GM12878 (cell line): ENCODE measurements at regions of chr7 and their contacts with region 1.

Region 1: DNA sequence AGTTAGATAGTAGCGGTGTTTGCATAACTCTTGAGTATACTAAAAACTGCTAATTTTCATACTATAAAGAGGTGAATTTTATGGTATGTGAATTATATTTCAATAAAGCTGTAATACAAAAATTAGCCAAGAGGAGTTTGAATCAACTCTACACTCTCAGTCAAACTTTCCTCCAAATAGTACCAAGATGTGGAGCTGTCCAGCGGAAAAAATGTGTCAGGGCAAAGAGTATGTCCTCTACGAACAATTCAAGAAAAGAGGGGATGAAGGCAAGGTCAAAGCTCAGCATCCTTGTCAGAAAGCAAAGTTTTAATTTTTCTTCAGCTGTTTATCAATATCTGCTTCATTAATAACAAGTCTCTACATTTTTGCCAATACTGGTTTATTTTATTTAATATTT is 51.8 kb upstream of the CDC14C start:
- DNase-seq: no peak
- ATAC-seq: no peak
- H3K4me3 ChIP-seq: no peak overlapping the region
- H3K27ac ChIP-seq: no peak overlapping the region
- H3K4me1 ChIP-seq: no peaks in the 10 kb centered on the region
- H3K27me3 ChIP-seq: no peaks in the 10 kb centered on the region
- CTCF ChIP-seq: no peak
- EP300 ChIP-seq: no peak
- POLR2A ChIP-seq: no peak
- RAD21 ChIP-seq: no peak

Region 2: DNA sequence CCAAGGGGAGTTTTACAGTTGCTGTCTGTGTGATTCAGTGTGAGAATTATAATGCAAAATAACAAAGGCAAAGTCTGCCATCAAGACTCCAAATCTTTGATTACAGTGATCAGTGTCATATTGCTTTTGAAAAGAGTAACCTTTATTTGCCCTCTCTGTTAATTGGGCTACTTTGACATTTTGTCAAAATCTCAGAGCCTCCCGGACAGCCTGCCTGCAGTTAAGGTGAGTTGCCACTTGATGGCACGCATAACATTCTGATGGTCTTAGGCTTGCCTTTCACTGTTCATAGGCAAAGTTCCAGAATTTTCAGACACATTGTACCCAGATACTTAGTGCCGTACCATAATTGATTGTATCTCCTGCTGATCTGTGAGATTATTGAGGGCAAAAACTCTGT is 447.8 kb before region 1 on chr7:
- CTCF ChIA-PET with region 1: no interaction called
- POLR2A ChIA-PET with region 1: no interaction called
- RAD21 ChIA-PET with region 1: no interaction called
- SMC1A ChIA-PET with region 1: no interaction called
- in situ Hi-C with region 1: no loop called
- intact Hi-C with region 1: loop called (anchors 5 kb)
- DNase-seq: no peak
- ATAC-seq: peak; percentile 80
- H3K4me3 ChIP-seq: no peak overlapping the region
- H3K27ac ChIP-seq: no peak overlapping the region
- H3K4me1 ChIP-seq: no peaks in the 10 kb centered on the region
- H3K27me3 ChIP-seq: no peaks in the 10 kb centered on the region; a peak in 1 of 4 replicates
- CTCF ChIP-seq: peak; percentile 54 to 65 (median 58)
- EP300 ChIP-seq: no peak
- POLR2A ChIP-seq: no peak
- RAD21 ChIP-seq: peak; percentile 69

Region 3: GRCh38 chr7:48611993-48612392 is 260.6 kb before region 1 on chr7:
- CTCF ChIA-PET with region 1: no interaction called
- POLR2A ChIA-PET with region 1: no interaction called
- RAD21 ChIA-PET with region 1: no interaction called
- SMC1A ChIA-PET with region 1: no interaction called
- in situ Hi-C with region 1: no loop called
- intact Hi-C with region 1: no loop called
- DNase-seq: no peak
- ATAC-seq: no peak
- H3K4me3 ChIP-seq: no peak overlapping the region
- H3K27ac ChIP-seq: no peak overlapping the region
- H3K4me1 ChIP-seq: no peaks in the 10 kb centered on the region
- H3K27me3 ChIP-seq: no peaks in the 10 kb centered on the region
- CTCF ChIP-seq: no peak
- EP300 ChIP-seq: no peak
- POLR2A ChIP-seq: no peak
- RAD21 ChIP-seq: no peak

Region 4: GRCh38 chr7:48887500-48887899 is 15.0 kb after region 1 on chr7:
- CTCF ChIA-PET with region 1: no interaction called
- POLR2A ChIA-PET with region 1: no interaction called
- RAD21 ChIA-PET with region 1: no interaction called
- SMC1A ChIA-PET with region 1: no interaction called
- in situ Hi-C with region 1: no loop called
- intact Hi-C with region 1: no loop called
- DNase-seq: no peak
- ATAC-seq: no peak
- H3K4me3 ChIP-seq: no peak overlapping the region
- H3K27ac ChIP-seq: no peak overlapping the region
- H3K4me1 ChIP-seq: no peaks in the 10 kb centered on the region
- H3K27me3 ChIP-seq: no peaks in the 10 kb centered on the region
- CTCF ChIP-seq: no peak
- EP300 ChIP-seq: no peak
- POLR2A ChIP-seq: no peak
- RAD21 ChIP-seq: no peak